BJ (cell line): ENCODE measurements at regions of chr2 and their contacts with region 1.

Region 1: DNA sequence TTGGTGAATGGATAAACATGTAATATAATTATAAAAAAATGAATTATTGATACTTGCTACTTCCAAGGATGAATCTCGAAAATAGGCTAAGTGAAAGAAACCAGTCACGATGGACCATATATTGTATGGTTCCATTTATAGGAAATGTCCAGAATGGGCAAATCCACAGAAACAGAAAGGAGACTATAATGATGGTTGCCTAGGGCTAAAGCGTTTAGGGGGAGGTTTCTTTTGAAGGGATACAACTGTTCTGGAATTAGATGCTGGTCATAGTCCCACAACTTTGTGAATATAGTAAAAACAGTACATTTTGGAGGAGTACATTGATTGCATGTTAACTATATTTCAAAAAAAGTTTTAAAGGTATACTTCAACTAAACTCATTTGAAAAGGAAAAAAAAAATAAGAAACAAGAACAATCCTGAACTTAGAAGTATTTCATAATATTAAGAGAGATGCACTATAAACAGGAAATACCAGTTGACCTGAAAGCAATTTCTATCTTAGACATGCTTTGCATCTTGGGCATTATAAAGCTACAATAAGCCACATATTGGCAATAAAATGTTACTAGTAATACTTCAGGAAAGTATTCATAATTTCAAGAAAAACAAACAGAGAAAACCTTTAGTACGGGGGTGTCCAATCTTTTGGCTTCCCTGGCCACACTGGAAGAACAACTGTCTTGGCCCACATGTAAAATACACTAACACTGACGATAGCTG is 130.0 kb downstream of the C2orf74 start:
- DNase-seq: peak; percentile 22
- H3K4me3 ChIP-seq: no peak overlapping the region
- H3K27me3 ChIP-seq: no peaks in the 10 kb centered on the region
- CTCF ChIP-seq: no peak

Region 2: GRCh38 chr2:60463249-60463648 is 828.8 kb before region 1 on chr2:
- CTCF ChIA-PET with region 1: no interaction called
- POLR2A ChIA-PET with region 1: no interaction called
- DNase-seq: no peak
- H3K4me3 ChIP-seq: no peak overlapping the region
- H3K27me3 ChIP-seq: no peaks in the 10 kb centered on the region
- CTCF ChIP-seq: no peak

Region 3: GRCh38 chr2:61255580-61256437 is 36.2 kb before region 1 on chr2:
- CTCF ChIA-PET with region 1: no interaction called
- POLR2A ChIA-PET with region 1: no interaction called
- DNase-seq: peak; percentile 53
- H3K4me3 ChIP-seq: no peak overlapping the region
- H3K27me3 ChIP-seq: no peaks in the 10 kb centered on the region
- CTCF ChIP-seq: no peak

Region 4: GRCh38 chr2:61435291-61435690 is 143.3 kb after region 1 on chr2:
- CTCF ChIA-PET with region 1: no interaction called
- POLR2A ChIA-PET with region 1: interaction called, 14 read pairs
- DNase-seq: no peak
- H3K4me3 ChIP-seq: no peak overlapping the region
- H3K27me3 ChIP-seq: no peaks in the 10 kb centered on the region
- CTCF ChIP-seq: no peak

Region 5: DNA sequence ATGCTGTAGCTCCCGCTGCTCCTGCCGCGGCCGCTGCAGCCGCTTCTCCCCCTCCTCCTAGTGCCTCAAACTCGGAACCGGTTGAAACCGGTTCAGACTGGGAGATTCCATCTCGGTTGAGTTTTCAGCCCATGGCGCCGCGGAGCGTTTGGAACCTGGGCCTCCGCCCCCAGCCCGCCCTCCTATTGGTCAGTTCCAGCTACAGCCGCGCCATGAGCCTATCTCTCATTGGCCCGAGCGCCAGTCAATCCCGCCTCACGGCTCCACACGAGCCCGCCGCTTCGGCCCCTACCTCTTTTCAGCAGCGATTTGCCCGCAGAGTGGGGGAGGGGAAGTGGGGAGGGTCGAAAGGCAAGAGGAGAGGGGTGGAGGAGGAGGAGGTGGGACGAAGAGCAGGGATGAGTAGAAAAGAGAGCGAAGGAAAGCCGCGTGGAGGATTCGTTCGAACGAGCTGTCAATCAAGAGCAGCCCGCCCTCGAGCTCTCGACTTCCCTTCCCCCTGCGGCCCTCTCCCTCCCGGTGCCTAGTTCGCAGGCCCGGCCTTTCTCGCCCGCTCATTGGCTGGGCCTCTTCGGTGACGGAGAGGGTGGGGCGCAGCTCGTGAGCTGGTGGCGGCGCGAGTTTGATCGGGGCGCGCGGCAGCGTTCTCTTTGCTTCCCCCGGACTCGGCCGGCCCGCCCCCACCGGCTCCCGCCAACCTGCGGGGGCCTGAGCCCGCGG is 246.3 kb after region 1 on chr2 and contains the start of gene XPO1:
- CTCF ChIA-PET with region 1: no interaction called
- POLR2A ChIA-PET with region 1: no interaction called
- DNase-seq: peak; percentile 94
- H3K4me3 ChIP-seq: peak within 1 kb of the TSS; percentile 96
- H3K27me3 ChIP-seq: no peaks in the 10 kb centered on the region
- CTCF ChIP-seq: no peak
- polyA plus RNA-seq, gene XPO1: 39.1 and 89.7 TPM in 2 replicates